GM12878 (cell line): ENCODE measurements at regions of chr1 and their contacts with region 1.

Region 1: DNA sequence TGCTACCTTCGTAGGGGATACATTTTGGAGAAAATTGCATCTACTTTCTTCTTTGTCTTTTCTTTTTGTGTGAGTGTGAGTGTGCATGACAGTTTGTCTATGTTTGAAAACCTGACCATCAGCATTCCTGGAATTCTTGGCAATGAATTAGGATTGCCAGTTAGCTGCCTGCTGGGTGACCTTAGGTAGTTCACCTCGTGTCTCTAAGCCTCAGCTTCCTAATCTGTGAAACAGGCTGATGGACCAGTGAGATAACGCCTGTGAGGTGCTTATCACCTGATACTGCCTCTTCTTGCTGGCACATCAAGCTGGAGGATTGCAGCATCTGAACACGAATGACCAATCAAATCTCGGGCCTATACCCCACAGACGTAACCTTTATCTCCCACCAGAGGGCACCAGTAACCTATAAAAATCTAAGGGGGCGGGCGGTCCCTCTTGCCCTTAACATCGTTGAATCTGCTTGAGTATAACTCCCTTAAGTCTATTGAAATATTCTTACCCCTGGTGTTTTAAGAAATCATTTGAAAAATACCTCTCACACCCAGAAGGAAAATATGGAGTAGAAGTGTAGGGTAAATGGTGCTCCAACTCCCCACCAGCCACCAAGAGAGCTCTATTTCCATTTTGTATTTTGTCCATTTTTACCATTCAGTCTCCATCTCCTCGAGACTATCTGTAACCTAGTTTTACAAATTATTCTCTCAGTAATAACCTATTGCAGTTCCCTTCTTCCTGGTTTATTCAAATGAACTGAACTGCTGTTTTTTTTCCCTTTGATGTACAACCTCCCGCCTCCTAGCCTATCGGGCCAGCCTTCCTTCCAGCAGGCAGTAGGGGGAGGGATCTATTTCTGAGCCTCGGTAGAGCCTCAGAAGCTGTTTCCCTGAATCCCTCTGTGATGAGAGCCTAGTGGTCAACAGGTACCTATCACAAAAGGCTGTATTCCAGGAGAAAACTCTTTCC is 49.7 kb downstream of the MDM4 start:
- DNase-seq: no peak
- ATAC-seq: peak; percentile 87
- H3K4me3 ChIP-seq: no peak overlapping the region
- H3K27ac ChIP-seq: peak overlapping the region; percentile 45
- H3K4me1 ChIP-seq: peaks cover 24% of the 10 kb centered on the region
- H3K27me3 ChIP-seq: no peaks in the 10 kb centered on the region
- CTCF ChIP-seq: peak; percentile 58 to 78 (median 72)
- EP300 ChIP-seq: no peak
- POLR2A ChIP-seq: no peak
- RAD21 ChIP-seq: peak; percentile 78

Region 2: DNA sequence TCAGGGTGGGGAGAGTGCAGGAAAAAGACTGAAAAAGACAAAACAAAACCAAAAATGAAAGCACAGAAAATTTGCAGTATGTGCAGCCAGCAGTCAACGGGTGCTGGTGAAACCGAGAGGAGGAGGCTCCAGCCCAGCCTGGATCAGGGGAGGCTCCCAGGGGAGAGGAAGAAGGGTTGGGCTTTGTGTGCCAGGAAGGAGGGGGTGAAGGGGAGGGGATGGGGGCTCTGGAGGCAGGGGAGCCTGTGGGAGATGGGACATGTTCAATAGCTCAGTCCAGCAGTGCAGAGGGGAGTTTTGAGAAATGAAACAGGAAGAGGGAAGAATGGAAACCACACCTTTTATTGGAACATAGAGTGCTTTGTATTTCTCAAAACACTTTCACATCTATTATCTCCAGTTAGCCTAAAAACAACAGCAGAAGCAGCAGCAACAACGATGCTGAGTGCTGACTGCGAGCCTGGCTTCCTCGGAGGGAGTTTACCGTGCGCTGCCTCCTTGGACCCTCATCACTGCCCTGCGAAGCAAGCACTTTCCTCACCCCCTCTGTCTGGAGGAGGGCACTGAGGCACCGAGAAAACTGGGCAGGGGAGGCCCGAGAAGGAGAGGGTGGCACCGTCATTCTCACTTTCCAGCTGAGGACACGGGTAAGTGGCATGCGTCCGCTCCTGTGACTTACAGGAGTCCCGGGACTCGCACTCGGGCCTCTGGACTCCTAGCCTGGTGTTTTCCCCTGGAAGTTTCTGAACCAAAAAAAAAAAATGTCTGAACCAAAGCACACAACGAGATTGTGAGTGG is 13.2 kb after region 1 on chr1:
- CTCF ChIA-PET with region 1: interaction called, 59 read pairs
- POLR2A ChIA-PET with region 1: interaction called, 4 read pairs
- RAD21 ChIA-PET with region 1: interaction called, 30 read pairs
- SMC1A ChIA-PET with region 1: interaction called, 17 read pairs
- in situ Hi-C with region 1: no loop called
- intact Hi-C with region 1: loop called (anchors 1 kb)
- DNase-seq: peak; percentile 65
- ATAC-seq: peak; percentile 89
- H3K4me3 ChIP-seq: peak overlapping the region; percentile 52; the same call in 1 of the 2 replicates
- H3K27ac ChIP-seq: peak overlapping the region; percentile 52
- H3K4me1 ChIP-seq: peaks cover 23% of the 10 kb centered on the region
- H3K27me3 ChIP-seq: no peaks in the 10 kb centered on the region
- CTCF ChIP-seq: no peak
- EP300 ChIP-seq: peak in 1 of 2 experiments; percentile 69; a peak in 2 of 4 replicates
- POLR2A ChIP-seq: peak; percentile 37
- RAD21 ChIP-seq: no peak

Region 3: DNA sequence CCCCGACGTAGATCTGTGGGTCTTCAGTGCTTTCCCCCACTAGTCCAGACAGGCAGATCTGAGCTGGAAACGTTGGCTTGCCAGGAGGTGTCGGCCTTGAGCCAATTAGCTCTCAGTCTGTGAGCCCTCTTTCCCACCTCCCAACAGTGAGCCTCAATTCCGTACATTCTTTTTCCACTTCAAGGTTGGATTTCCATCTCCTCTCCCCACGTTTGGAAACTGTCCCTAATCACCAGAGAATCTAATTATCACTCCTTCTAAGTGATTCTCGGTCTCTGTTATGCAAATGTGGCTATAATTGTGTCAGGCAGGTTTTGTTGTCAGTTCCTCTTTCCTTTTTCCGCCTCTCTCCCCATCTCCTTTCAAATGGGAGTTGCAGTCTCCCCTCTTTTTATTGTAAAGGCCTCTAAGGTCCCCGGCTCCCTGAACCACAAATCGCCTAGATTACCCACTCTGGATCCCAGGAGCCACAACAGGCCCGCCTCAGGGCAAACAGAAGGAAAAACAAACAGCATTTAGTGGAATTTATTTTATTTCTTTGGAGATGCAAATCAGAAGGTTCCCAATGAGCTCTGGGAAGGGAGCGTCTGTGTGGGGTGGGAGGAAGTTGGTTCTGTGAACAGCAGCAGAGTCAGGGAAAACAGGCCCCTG is 149.1 kb after region 1 on chr1:
- CTCF ChIA-PET with region 1: interaction called, 17 read pairs
- POLR2A ChIA-PET with region 1: no interaction called
- RAD21 ChIA-PET with region 1: interaction called, 6 read pairs
- SMC1A ChIA-PET with region 1: interaction called, 12 read pairs
- in situ Hi-C with region 1: no loop called
- intact Hi-C with region 1: no loop called
- DNase-seq: peak; percentile 51
- ATAC-seq: peak; percentile 77
- H3K4me3 ChIP-seq: peak overlapping the region; percentile 26
- H3K27ac ChIP-seq: peak overlapping the region; percentile 45; the same call in 1 of the 2 replicates
- H3K4me1 ChIP-seq: peaks cover 10% of the 10 kb centered on the region
- H3K27me3 ChIP-seq: no peaks in the 10 kb centered on the region
- CTCF ChIP-seq: peak in 2 of 3 experiments; percentile 18 to 32; a peak in 1 of 6 replicates
- EP300 ChIP-seq: peak; percentile 18 to 40; a peak in 2 of 4 replicates
- POLR2A ChIP-seq: no peak
- RAD21 ChIP-seq: no peak

Region 4: GRCh38 chr1:204791453-204792353 is 225.8 kb after region 1 on chr1:
- CTCF ChIA-PET with region 1: interaction called, 25 read pairs
- POLR2A ChIA-PET with region 1: no interaction called
- RAD21 ChIA-PET with region 1: interaction called, 7 read pairs
- SMC1A ChIA-PET with region 1: interaction called, 5 read pairs
- in situ Hi-C with region 1: no loop called
- intact Hi-C with region 1: no loop called
- DNase-seq: no peak
- ATAC-seq: peak; percentile 96
- H3K4me3 ChIP-seq: no peak overlapping the region
- H3K27ac ChIP-seq: no peak overlapping the region
- H3K4me1 ChIP-seq: no peaks in the 10 kb centered on the region
- H3K27me3 ChIP-seq: peaks cover 3 to 4% of the 10 kb centered on the region in 2 experiments; a peak in 1 of 4 replicates
- CTCF ChIP-seq: peak; percentile 62 to 87 (median 87)
- EP300 ChIP-seq: no peak
- POLR2A ChIP-seq: no peak
- RAD21 ChIP-seq: no peak